ENCODE measurements at regions of chr1 and their contacts with region 1.

Region 1: GRCh38 chr1:91511386-91511785 is 10.7 kb downstream of the CDC7 start:
- DNase-seq: no peak
- H3K4me3 ChIP-seq: no peak overlapping the region
- CTCF ChIP-seq: peak; percentile 52

Region 2: DNA sequence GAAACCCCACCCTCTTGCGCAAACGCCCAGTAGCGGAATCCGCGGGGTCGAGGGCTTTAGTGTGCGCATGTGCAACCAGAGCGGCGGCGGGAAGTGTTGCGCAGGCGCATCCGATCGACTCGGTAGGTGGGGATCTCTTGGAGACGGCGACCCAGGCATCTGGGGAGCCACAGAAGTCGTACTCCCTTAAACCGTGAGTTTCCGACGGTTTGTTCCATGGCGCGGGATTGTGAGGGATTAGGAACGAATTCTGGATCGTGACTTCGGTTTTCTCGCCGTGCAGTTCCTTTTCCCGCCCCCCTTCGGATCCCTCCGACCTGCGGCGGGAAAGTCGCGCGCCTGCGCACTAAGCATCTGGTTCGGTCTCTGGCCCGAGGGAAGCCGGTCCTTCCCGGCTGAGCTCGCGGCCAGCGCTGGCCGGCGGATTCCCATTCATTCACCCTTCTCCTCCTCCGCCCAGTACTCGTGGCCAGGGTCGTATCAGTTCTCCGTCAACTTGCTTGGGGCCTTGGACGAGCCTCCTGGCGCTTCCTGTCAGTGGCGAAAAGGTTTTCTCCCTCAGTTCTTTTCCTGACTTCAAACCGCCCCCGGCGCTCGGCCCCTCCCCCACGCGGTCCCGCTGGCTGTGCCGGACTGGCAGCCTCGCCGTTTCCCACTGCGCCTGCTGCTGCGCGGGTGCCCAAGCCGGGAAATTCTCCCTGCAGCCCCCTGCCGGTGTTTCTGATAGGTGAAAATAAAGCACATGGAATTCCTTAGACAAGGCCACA is 10.4 kb before region 1 on chr1 and contains the start of gene CDC7:
- CTCF ChIA-PET with region 1: interaction called, 63 read pairs
- POLR2A ChIA-PET with region 1: interaction called, 3 read pairs
- DNase-seq: peak; percentile 38
- H3K4me3 ChIP-seq: peak within 1 kb of the TSS; percentile 88
- CTCF ChIP-seq: peak; percentile 53

Region 3: DNA sequence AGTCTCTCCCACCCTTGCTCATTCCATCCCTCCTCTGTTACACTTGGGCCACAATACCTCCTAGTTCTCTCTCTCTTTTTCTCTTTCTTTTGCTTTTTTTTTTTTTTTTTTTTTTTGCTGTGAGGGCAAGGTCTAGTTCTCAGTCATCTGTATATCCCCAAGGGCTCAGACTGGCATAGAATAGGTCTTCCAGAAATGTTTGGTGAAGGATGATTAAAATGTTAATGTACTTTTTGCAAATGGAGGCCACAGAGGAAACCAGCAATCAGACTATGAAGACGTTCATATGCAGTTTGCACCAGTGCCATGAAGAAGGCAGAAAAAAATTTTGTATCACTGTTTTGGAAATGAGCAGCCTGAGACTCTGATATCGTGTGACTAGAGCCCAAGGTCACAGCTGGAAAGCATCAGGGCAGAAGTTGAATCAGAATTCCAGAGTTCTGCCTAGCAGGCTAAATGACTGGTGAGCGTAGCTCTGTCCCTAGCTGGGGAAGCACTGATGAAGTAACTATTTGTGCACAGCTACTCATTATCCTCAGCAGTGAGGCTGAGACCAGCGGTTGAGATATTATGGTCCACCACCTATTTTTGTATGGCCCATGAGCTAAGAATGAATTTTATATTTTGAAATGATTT is 188.1 kb after region 1 on chr1:
- CTCF ChIA-PET with region 1: interaction called, 14 read pairs
- POLR2A ChIA-PET with region 1: no interaction called
- DNase-seq: peak; percentile 68
- H3K4me3 ChIP-seq: no peak overlapping the region
- CTCF ChIP-seq: no peak

Region 4: DNA sequence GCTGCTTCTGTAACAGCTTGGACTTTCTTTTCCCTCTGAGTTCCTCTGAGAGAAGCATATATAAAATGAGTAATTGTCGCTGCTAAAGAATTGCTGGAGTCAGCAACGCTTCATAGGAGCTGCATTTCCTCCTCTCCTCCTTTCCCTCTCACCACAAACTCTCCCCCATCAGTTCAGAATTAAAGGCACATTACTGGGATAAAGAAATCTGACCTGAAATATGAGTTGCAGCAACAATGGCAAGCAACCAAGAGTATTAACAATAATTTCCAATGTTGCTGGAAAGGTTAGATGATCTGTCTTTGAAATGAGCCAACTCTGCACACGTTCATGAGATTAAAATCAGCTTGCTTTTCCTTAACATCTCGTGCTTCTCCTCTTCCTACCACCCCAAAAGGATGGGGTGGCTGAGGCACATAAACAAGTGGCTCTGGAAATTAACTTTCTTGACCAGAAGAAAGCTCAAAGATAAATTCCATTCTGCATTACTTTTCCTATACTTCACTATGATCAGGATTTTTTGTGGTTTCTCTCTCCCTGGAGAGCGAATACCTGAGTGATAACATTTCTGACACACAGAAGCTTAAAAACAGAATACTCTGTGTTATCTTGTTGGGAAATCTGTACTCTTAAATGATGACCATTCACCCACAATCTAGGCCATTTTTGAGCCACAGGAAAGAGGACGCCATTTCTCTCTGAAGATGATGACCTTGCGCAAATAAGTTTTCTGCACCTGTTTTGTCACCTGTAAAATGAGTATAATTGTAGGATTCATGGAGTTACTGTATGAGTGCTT is 284.4 kb after region 1 on chr1:
- CTCF ChIA-PET with region 1: interaction called, 13 read pairs
- POLR2A ChIA-PET with region 1: no interaction called
- DNase-seq: peak; percentile 56
- H3K4me3 ChIP-seq: no peak overlapping the region
- CTCF ChIP-seq: no peak

Region 5: DNA sequence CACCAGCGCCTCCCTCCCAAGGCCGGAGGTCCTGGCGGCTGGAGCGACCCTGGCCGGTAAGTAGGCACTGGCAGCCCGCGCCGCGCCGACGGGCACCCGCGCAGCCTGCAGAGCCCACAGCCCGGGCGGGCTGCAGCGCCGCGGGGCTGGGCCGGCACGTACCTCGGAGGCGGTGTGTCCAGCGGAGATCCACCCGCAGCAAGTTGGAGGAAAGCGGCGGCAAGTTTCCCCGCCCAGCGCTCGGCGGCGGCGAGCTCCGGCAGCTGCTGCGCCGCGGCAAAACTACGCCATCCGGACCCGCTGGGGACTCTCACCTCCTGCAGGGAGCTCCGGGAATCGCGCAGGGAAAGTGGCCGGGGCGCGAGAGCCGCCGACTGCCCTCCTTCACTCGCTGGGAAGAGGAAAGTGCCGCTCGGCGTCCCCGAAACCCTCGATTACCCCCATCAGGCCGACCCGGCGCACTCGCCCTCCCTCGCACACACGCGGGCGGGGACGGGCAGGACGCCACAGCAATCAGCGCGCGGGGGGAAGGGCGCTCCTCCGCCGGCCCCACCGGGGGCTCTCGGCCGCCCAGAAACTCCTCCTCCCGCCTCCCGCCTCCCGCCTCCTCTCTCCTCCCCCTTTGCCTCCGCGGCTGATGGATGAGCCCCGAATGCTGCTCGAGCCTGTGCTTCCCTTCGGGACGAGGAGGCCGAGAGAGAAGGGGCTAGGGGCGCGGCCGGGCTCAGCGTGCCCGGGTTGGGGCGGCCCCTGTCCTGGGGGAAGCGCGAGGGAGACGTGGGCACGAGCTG is 374.5 kb after region 1 on chr1 and contains the start of gene TGFBR3:
- CTCF ChIA-PET with region 1: interaction called, 65 read pairs
- POLR2A ChIA-PET with region 1: no interaction called
- DNase-seq: no peak
- H3K4me3 ChIP-seq: peak within 1 kb of the TSS; percentile 76
- CTCF ChIP-seq: peak; percentile 82

Region 6: DNA sequence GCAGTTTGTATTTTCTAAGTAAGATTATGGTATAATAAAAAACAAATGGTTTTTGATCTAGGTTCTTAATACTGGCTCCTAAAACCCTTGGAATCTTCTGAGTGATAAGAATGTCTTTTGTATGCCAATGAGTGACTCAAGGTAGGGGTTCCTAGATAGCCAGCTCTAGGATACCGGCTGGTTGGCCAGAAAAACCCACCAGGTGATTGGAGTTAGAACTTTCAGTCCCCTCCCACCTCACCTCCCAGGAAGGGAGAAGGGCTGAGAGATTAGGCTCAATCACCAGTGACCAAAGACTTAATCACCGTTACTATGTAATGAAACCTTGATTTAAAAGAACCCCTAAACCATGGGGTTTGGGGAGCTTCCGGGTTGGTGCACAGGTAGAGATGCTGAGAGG is 429.1 kb after region 1 on chr1:
- CTCF ChIA-PET with region 1: interaction called, 11 read pairs
- POLR2A ChIA-PET with region 1: no interaction called
- DNase-seq: no peak
- H3K4me3 ChIP-seq: no peak overlapping the region
- CTCF ChIP-seq: no peak